ENCODE measurements at regions of chr5 and their contacts with region 1.

Region 1: DNA sequence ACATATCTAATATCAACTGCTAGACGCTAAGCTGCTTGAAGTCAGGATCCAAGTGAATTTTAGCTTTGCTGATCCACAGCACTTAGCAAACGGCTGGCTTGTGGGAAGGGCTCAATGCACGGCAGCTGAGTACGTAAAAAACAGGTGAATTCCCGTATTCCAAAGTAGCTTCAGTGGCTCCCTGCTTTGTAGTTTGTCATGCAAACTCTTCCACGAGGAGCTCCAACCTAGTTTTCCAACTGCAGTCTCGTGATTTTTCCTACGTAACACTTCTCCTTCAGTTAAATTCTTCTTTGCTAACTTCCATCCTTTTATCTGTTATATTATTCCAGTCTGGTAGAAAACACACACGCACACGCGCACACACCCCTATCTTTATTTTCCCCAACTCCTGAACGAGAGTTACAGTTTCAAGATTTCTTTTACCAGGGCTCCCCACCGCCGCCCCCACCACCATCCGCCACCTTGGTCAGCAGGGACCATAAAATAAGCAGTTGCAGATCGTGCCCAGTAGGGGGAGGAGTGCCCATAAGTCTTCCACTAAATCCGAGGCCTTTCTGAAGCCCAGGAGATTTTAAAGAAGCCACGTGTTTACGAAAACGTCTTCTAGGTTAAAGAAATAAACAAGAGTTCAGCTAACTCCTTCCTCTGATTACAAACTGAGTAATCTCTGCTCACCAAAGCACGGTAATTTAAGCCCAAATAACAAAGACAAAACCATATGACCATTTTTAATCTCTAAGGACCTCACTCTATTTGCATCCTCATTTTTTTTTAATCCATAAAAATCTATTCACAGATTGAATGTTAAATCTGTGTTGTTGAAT is 34.8 kb upstream of the TRIO start:
- H3K4me3 Mint-ChIP-seq: peak overlapping the region; percentile 74
- H3K27ac Mint-ChIP-seq: peak overlapping the region; percentile 78
- H3K4me1 Mint-ChIP-seq: peaks cover 21% of the 10 kb centered on the region
- H3K27me3 Mint-ChIP-seq: peaks cover 6% of the 10 kb centered on the region

Region 2: GRCh38 chr5:14124027-14124426 is 15.6 kb after region 1 on chr5:
- intact Hi-C with region 1: no loop called
- H3K4me3 Mint-ChIP-seq: no peak overlapping the region
- H3K27ac Mint-ChIP-seq: no peak overlapping the region
- H3K4me1 Mint-ChIP-seq: no peaks in the 10 kb centered on the region
- H3K27me3 Mint-ChIP-seq: no peaks in the 10 kb centered on the region

Region 3: DNA sequence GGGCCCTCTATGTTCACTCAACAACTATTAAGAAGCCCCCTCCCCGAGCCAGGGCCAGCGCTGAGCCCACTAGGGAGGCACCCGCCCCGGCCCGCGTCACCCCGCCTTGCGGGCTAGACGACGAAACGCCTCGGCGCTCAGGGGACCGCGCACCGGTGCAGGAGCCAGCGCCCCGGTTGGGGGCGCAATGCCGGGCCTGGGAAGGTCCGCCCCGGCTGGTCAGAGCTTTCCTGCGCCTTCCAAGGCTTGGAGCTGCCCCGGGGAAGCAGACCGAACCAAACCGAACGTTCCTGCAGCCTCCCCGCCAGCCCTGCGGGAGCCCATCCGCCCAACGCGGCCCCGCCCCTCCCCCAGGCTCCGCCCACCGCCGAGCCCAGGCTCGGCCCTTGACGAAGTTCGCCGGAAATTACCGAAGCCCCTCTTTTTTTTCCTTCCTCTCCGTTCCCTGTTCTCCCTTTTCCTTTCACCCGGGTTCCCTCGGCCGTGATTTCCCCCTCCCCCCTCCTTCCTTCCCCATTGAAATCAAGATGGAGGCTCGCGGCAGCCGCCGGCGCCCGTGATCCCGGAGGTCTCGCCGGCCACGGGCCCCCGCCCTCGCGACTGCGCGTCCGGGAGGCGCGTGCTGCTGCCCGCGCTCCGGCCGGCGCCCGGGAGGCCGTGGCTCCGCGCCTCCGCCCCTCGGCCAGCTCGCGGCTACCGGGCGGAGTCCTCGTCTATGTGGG is 34.6 kb after region 1 on chr5 and contains the start of gene TRIO:
- intact Hi-C with region 1: loop called (anchors 5 kb)
- H3K4me3 Mint-ChIP-seq: peak within 1 kb of the TSS; percentile 91
- H3K27ac Mint-ChIP-seq: peak within 1 kb of the TSS; percentile 90
- H3K4me1 Mint-ChIP-seq: peaks cover 28% of the 10 kb centered on the region
- H3K27me3 Mint-ChIP-seq: peaks cover 13% of the 10 kb centered on the region

Region 4: GRCh38 chr5:14270209-14270702 is 161.9 kb after region 1 on chr5:
- intact Hi-C with region 1: loop called (anchors 2 kb)
- H3K4me3 Mint-ChIP-seq: no peak overlapping the region
- H3K27ac Mint-ChIP-seq: no peak overlapping the region
- H3K4me1 Mint-ChIP-seq: peaks cover 27% of the 10 kb centered on the region
- H3K27me3 Mint-ChIP-seq: no peaks in the 10 kb centered on the region

Region 5: DNA sequence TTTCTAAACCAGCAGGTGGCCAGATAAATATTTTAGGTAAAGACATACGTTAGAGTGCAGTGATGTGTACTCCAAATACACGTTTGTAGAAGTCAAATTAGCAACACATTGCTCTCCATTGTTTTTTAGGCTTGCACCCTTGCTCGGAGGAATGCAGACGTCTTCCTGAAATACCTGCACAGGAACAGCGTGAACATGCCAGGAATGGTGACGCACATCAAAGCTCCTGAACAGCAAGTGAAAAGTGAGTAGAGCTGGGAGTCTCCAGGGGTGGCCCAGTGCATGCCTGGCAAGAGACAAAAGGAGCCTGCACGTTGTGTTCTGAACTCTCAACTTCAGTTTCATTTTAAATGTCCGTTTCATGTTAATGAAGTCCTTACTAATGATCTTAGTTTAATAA is 265.7 kb after region 1 on chr5:
- intact Hi-C with region 1: no loop called
- H3K4me3 Mint-ChIP-seq: no peak overlapping the region
- H3K27ac Mint-ChIP-seq: no peak overlapping the region
- H3K4me1 Mint-ChIP-seq: no peaks in the 10 kb centered on the region
- H3K27me3 Mint-ChIP-seq: no peaks in the 10 kb centered on the region

Measured in dendritic cell treated with granulocyte-macrophage colony-stimulating factor and Interleukin-4, amounts not matched to agents 40 ng/mL and 50 ng/mL, for 4 days (primary cell).